AG04449 (cell line): ENCODE measurements at regions of chr1 and their contacts with region 1.

Region 1: GRCh38 chr1:112501810-112502641 is 6.7 kb upstream of the WNT2B start:
- DNase-seq: no peak
- H3K4me3 ChIP-seq: peak overlapping the region; percentile 52
- CTCF ChIP-seq: peak; percentile 94

Region 2: GRCh38 chr1:112074711-112075110 is 427.3 kb before region 1 on chr1:
- CTCF ChIA-PET with region 1: no interaction called
- POLR2A ChIA-PET with region 1: no interaction called
- DNase-seq: no peak
- H3K4me3 ChIP-seq: no peak overlapping the region
- CTCF ChIP-seq: no peak

Region 3: GRCh38 chr1:112369392-112370285 is 132.4 kb before region 1 on chr1:
- CTCF ChIA-PET with region 1: interaction called, 17 read pairs
- POLR2A ChIA-PET with region 1: no interaction called
- DNase-seq: no peak
- H3K4me3 ChIP-seq: no peak overlapping the region
- CTCF ChIP-seq: peak; percentile 99

Region 4: GRCh38 chr1:112466078-112466660 is 35.9 kb before region 1 on chr1:
- CTCF ChIA-PET with region 1: interaction called, 17 read pairs
- POLR2A ChIA-PET with region 1: no interaction called
- DNase-seq: peak; percentile 74
- H3K4me3 ChIP-seq: peak overlapping the region; percentile 46
- CTCF ChIP-seq: peak; percentile 88

Region 5: GRCh38 chr1:112522621-112523020 is 20.6 kb after region 1 on chr1:
- CTCF ChIA-PET with region 1: interaction called, 17 read pairs
- POLR2A ChIA-PET with region 1: interaction called, 5 read pairs
- DNase-seq: peak; percentile 85
- H3K4me3 ChIP-seq: no peak overlapping the region
- CTCF ChIP-seq: no peak

Region 6: DNA sequence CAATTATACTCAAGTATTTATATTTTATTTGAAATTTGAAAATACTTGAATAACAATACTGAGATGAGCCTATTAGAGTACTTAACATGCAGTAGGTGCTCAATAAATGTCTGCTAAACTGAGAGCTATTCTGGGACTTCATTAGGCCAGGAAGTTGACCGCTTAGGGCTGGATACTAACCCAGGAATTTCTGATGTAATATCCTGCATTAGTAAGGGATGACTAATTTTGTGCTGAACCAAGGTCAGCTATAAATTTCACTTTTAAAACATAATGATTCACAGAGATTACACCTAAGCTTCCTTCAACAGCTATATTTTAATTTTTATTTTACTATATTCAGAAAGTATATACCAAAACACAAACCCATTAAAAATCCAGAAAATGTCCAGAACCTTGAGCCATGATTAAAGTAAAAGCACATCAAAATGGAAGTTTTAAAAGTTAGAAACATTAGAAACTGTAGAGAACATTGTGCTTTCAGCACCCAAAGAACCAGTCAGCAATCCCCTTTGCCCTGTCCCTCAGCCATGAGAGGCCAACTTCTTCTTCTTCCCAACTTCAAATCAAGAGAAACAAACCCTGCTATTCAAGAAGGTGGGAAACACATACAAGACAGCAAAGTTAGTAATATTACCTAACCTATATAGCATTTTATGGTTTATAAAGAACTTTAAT is 42.1 kb after region 1 on chr1:
- CTCF ChIA-PET with region 1: interaction called, 16 read pairs
- POLR2A ChIA-PET with region 1: interaction called, 4 read pairs
- DNase-seq: peak; percentile 87
- H3K4me3 ChIP-seq: no peak overlapping the region
- CTCF ChIP-seq: no peak

Region 7: DNA sequence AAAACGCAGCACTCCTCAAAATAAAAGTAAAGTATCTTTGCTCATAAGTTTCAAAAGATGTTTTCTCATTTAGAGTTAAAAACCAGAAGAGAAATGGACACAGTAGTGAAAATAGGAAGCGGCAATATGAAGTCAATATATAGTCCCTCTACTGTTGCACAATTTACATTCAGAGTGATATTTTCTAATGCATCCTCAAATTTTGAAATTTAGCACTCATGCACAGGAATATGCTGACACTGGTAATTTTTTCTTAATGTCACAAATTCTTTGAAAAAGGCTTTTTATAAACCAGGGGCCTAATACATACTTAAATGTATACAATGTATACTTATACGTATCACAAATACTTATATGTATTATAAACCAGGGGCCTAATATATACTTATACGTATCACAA is 97.5 kb after region 1 on chr1:
- CTCF ChIA-PET with region 1: interaction called, 16 read pairs
- POLR2A ChIA-PET with region 1: no interaction called
- DNase-seq: no peak
- H3K4me3 ChIP-seq: no peak overlapping the region
- CTCF ChIP-seq: no peak

Region 8: GRCh38 chr1:112674439-112674985 is 172.5 kb after region 1 on chr1 and contains the start of gene MOV10:
- CTCF ChIA-PET with region 1: interaction called, 25 read pairs
- POLR2A ChIA-PET with region 1: no interaction called
- DNase-seq: no peak
- H3K4me3 ChIP-seq: peak within 1 kb of the TSS; percentile 87
- CTCF ChIP-seq: no peak